H1 (cell line): ENCODE measurements at regions of chr14 and their contacts with region 1.

Region 1: DNA sequence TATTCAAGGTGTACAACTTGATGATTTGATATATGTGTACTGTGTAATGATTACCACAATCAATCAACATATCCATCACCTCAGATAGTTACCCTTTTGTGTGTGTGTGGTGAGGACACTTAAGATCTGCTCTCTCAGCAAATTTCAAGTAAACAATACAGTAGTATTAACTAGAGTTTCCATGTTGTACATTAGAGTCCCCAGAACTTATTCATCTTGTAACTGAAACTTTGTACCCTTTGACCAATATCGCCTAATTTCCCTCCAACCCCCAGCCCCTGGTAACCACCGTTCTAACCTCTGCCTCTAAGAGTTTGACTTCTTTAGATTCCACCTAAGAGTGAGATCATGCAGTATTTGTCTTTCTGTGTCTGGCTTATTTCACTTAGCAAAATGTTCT is 12.1 kb downstream of the ADCK1 start:
- DNase-seq: no peak
- H3K4me3 ChIP-seq: no peak overlapping the region
- H3K27ac ChIP-seq: no peak overlapping the region
- H3K4me1 ChIP-seq: no peaks in the 10 kb centered on the region
- H3K27me3 ChIP-seq: no peaks in the 10 kb centered on the region
- CTCF ChIP-seq: no peak
- EP300 ChIP-seq: no peak
- POLR2A ChIP-seq: no peak
- RAD21 ChIP-seq: no peak

Region 2: GRCh38 chr14:77654001-77654441 is 158.0 kb before region 1 on chr14:
- CTCF ChIA-PET with region 1: interaction called, 27 read pairs
- POLR2A ChIA-PET with region 1: no interaction called
- DNase-seq: peak in 1 of 2 experiments; percentile 55
- H3K4me3 ChIP-seq: no peak overlapping the region
- H3K27ac ChIP-seq: no peak overlapping the region
- H3K4me1 ChIP-seq: peaks cover 3 to 15% (median 10%) of the 10 kb centered on the region in 4 experiments; a peak in 6 of 7 replicates
- H3K27me3 ChIP-seq: no peaks in the 10 kb centered on the region
- CTCF ChIP-seq: no peak
- EP300 ChIP-seq: no peak
- POLR2A ChIP-seq: no peak
- RAD21 ChIP-seq: no peak

Region 3: GRCh38 chr14:77760381-77761246 is 51.4 kb before region 1 on chr14 and contains the start of gene SNW1:
- CTCF ChIA-PET with region 1: interaction called, 10 read pairs
- POLR2A ChIA-PET with region 1: interaction called, 4 read pairs
- DNase-seq: peak; percentile 83 to 88
- H3K4me3 ChIP-seq: peak within 1 kb of the TSS; percentile 87 to 100 (median 100)
- H3K27ac ChIP-seq: peak within 1 kb of the TSS; percentile 93
- H3K4me1 ChIP-seq: peaks cover 1 to 13% (median 7%) of the 10 kb centered on the region in 4 experiments; a peak in 4 of 7 replicates
- H3K27me3 ChIP-seq: no peaks in the 10 kb centered on the region
- CTCF ChIP-seq: no peak
- EP300 ChIP-seq: no peak
- POLR2A ChIP-seq: peak; percentile 59 to 79
- RAD21 ChIP-seq: no peak
- total RNA-seq, gene SNW1: 79.2 and 88.8 TPM in 2 replicates

Region 4: DNA sequence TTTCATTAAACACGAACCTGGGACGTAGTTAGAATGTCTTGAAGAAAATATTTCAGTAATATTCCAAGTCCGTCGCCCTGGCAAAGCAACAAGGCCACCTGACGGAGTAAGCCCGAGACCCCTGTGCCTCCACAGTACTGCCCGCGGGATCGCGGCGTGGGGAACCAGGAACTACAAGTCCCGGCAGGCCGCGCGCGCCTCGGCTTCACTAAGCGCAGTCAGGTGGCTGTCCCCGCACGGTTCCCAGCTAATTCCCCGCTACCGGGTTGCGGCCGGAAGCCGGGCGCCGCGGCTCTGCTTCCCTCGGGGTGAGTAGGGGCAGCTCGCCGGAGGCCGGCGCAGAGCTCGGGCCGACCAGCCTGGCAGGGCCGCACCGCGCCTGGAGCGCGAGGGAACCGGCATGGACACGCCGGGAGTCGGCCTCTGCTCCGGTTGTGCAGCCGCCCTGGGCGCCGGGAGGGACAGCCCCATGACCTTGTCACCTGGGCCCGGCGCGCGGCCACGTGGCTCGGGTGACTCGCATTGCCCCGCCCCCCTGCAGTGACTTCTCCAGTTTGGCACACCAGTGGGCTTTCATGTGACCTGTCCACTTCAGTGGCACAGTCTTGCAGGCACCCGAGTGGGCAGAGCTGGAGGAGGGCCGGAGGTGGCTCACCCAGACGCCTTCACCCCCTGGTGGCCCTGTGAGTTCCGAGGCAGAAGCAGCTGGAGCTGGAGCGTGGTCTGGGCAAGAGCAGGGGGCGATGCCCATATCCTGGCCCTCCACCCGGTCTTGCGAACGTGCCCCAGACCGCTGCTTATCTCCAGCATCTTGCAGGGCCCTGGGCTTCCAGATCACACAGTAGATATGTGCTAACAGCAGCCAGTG is 11.9 kb before region 1 on chr14 and contains the start of gene ADCK1:
- CTCF ChIA-PET with region 1: interaction called, 12 read pairs
- POLR2A ChIA-PET with region 1: no interaction called
- DNase-seq: peak in 1 of 2 experiments; percentile 88
- H3K4me3 ChIP-seq: peak within 1 kb of the TSS; percentile 74 to 86 (median 84)
- H3K27ac ChIP-seq: peak within 1 kb of the TSS; percentile 41; the same call in 1 of the 2 replicates
- H3K4me1 ChIP-seq: peaks cover 0 to 13% (median 1%) of the 10 kb centered on the region in 4 experiments; a peak in 4 of 7 replicates
- H3K27me3 ChIP-seq: no peaks in the 10 kb centered on the region
- CTCF ChIP-seq: peak in 2 of 3 experiments; percentile 26 to 40; a peak in 2 of 4 replicates
- EP300 ChIP-seq: no peak
- POLR2A ChIP-seq: peak in 1 of 2 experiments; percentile 88; a peak in 2 of 3 replicates
- RAD21 ChIP-seq: no peak; a peak in 1 of 4 replicates
- total RNA-seq, gene ADCK1: 11.0 and 11.5 TPM in 2 replicates

Region 5: DNA sequence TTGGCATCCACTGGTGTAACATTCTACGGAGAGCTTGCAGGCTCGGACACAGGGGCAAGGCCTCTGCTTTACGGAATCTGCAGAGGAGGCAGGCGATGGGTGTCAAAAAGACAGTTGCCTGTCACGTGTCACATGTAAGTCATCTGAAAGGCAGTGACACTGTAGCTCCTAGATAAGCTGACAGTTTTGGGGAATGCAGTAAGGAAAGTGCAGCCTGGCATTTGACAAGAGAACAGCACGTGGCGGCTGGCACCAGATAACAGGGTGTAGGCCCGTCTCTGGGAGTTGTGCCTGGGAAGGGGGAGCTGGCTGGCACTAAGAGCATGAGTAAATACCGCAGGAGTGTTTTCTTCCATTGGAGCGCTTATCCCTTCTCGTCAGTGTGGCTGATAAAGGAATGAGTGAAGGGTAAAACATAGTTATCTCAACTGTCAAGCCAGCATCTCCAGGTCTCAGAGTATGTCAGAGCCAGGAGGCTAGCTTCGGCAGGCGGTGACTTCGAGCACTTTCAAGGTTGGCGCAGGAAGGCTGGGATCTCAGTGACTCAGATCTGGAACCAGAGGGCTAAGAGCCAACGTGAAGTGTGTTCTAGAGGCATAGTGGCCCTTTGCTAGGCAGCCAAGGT is 14.0 kb after region 1 on chr14:
- CTCF ChIA-PET with region 1: interaction called, 13 read pairs
- POLR2A ChIA-PET with region 1: no interaction called
- DNase-seq: no peak
- H3K4me3 ChIP-seq: no peak overlapping the region
- H3K27ac ChIP-seq: no peak overlapping the region
- H3K4me1 ChIP-seq: no peaks in the 10 kb centered on the region
- H3K27me3 ChIP-seq: no peaks in the 10 kb centered on the region
- CTCF ChIP-seq: no peak
- EP300 ChIP-seq: no peak
- POLR2A ChIP-seq: no peak
- RAD21 ChIP-seq: no peak